Activated B cell treated with CpG ODN at 0.5 μM for 24 hours (primary cell): ENCODE measurements at regions of chr5 and their contacts with region 1.

Region 1: GRCh38 chr5:157948738-157949410 is 89.9 kb upstream of the CLINT1 start:
- DNase-seq: peak; percentile 60
- ATAC-seq: peak; percentile 100
- H3K4me3 Mint-ChIP-seq: no peak overlapping the region
- H3K27ac Mint-ChIP-seq: no peak overlapping the region
- H3K4me1 Mint-ChIP-seq: peaks cover 6% of the 10 kb centered on the region
- H3K27me3 Mint-ChIP-seq: peaks cover 5% of the 10 kb centered on the region
- CTCF ChIP-seq: no peak

Region 2: GRCh38 chr5:157665467-157666100 is 283.3 kb before region 1 on chr5:
- CTCF ChIA-PET with region 1: interaction called, 3 read pairs
- POLR2A ChIA-PET with region 1: no interaction called
- intact Hi-C with region 1: loop called (anchors 5 kb)
- DNase-seq: no peak
- ATAC-seq: no peak
- H3K4me3 Mint-ChIP-seq: no peak overlapping the region
- H3K27ac Mint-ChIP-seq: no peak overlapping the region
- H3K4me1 Mint-ChIP-seq: peaks cover 31% of the 10 kb centered on the region
- H3K27me3 Mint-ChIP-seq: no peaks in the 10 kb centered on the region
- CTCF ChIP-seq: no peak

Region 3: DNA sequence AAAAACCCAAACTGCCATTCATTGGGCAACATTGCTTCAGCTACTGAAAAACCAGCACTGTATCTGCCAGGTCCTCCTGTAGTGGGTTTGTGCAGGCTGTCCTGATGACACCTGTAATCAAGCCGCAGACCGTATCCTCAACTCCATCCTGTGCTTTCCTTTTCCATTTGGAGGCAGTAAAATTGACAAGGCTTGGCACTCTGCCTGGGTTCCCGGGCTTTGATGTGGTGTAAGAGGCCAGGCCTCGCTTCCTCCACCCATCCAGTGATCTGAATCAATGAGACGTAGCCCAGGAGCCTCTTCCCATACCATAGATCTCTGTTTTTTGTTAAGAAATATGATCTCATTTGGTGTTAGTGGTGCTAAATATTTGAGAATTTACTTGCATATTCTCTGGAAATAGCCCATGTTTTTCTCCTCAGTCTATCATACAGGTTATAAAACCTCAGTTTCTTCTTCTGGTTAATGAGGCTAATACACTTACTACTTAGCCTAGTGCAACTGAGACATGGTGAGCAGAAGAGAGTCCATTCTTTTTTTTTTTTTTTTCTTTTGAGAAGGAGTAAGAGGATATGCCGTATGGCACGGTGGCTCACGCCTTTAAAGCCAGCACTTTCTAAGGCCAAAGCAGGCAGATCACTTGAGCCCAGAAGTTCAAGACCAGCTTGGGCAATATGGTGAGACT is 170.6 kb before region 1 on chr5:
- CTCF ChIA-PET with region 1: no interaction called
- POLR2A ChIA-PET with region 1: no interaction called
- intact Hi-C with region 1: no loop called
- DNase-seq: no peak
- ATAC-seq: no peak
- H3K4me3 Mint-ChIP-seq: no peak overlapping the region
- H3K27ac Mint-ChIP-seq: no peak overlapping the region
- H3K4me1 Mint-ChIP-seq: no peaks in the 10 kb centered on the region
- H3K27me3 Mint-ChIP-seq: no peaks in the 10 kb centered on the region
- CTCF ChIP-seq: no peak

Region 4: GRCh38 chr5:157812086-157812485 is 136.8 kb before region 1 on chr5:
- CTCF ChIA-PET with region 1: interaction called, 81 read pairs
- POLR2A ChIA-PET with region 1: no interaction called
- intact Hi-C with region 1: loop called (anchors 1 kb)
- DNase-seq: no peak
- ATAC-seq: no peak
- H3K4me3 Mint-ChIP-seq: no peak overlapping the region
- H3K27ac Mint-ChIP-seq: no peak overlapping the region
- H3K4me1 Mint-ChIP-seq: no peaks in the 10 kb centered on the region
- H3K27me3 Mint-ChIP-seq: no peaks in the 10 kb centered on the region
- CTCF ChIP-seq: no peak

Region 5: GRCh38 chr5:157858527-157859226 is 90.2 kb before region 1 on chr5 and contains the start of gene CLINT1:
- CTCF ChIA-PET with region 1: interaction called, 16 read pairs
- POLR2A ChIA-PET with region 1: interaction called, 3 read pairs
- intact Hi-C with region 1: loop called (anchors 1 kb)
- DNase-seq: peak; percentile 82
- ATAC-seq: peak; percentile 82
- H3K4me3 Mint-ChIP-seq: peak within 1 kb of the TSS; percentile 97
- H3K27ac Mint-ChIP-seq: peak within 1 kb of the TSS; percentile 93
- H3K4me1 Mint-ChIP-seq: peaks cover 76% of the 10 kb centered on the region
- H3K27me3 Mint-ChIP-seq: no peaks in the 10 kb centered on the region
- CTCF ChIP-seq: no peak
- total RNA-seq, gene CLINT1: 92.4 and 105 TPM in 2 replicates

Region 6: GRCh38 chr5:157994906-157995519 is 46.1 kb after region 1 on chr5:
- CTCF ChIA-PET with region 1: interaction called, 18 read pairs
- POLR2A ChIA-PET with region 1: no interaction called
- intact Hi-C with region 1: loop called (anchors 5 kb)
- DNase-seq: peak; percentile 21
- ATAC-seq: peak; percentile 84
- H3K4me3 Mint-ChIP-seq: no peak overlapping the region
- H3K27ac Mint-ChIP-seq: no peak overlapping the region
- H3K4me1 Mint-ChIP-seq: no peaks in the 10 kb centered on the region
- H3K27me3 Mint-ChIP-seq: peaks cover 2% of the 10 kb centered on the region
- CTCF ChIP-seq: no peak